ENCODE measurements at regions of chr11 and their contacts with region 1.

Region 1: DNA sequence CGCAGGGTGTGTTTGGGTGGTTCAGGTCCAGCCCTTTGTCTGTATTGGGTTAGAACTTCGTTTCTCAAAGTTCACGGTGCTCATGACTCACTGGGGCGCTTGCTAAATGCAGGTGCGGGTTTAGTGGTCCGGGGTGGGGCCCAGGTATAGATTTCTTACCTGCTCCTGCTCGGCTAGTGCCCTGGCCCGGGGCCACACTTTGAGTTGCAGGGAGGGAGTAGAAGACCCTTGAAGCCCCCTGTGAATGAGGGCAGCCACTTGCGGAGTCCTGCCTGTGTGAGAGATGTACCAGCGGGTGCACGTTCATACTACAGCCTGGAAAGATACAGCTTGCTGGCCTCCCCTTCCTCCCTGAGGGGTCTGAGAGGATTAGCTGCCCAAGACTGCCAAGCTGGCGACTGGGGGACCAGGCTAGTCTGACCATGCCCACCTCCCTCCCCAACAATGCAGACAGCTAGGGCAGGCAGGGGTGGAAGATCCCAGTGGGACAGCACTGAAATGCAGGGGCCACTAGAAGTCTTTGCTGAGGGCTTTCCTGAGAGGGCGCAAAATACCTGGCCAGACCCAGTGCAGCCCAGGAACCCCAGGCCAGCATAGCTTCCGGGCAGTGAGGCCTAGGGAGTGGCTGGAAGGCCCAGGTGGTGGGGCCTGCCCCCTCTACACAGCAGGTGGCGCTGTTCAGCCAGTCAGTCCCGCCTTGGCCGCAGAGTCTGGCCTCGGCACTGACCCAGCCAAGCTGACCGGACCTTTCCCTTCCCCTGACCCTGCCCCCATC is 5.1 kb upstream of the MYRF start:
- DNase-seq: peak; percentile 52
- H3K4me3 ChIP-seq: no peak overlapping the region
- H3K27ac ChIP-seq: no peak overlapping the region
- H3K4me1 ChIP-seq: no peaks in the 10 kb centered on the region
- H3K27me3 ChIP-seq: no peaks in the 10 kb centered on the region
- CTCF ChIP-seq: peak; percentile 93 to 98
- POLR2A ChIP-seq: no peak

Region 2: DNA sequence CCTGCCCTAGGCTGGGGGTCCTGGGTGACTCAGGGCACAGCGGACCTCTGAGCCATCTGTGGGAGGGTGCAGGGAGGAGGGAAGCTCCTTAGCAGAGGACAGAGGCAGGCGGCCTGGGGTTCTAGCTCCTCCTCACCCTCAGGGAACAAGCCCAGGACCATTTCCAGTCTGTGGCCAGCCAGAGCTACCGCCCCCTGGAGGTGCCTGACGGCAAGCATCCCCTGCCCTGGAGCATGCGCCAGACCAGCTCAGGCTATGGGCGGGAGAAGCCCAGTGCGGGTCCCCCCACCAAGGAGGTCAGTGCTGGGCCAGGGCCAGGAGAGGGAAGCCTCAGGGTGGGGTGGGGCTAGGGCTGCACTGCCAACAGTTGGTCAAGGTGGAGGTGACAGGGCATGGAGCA is 264.9 kb before region 1 on chr11:
- CTCF ChIA-PET with region 1: no interaction called
- POLR2A ChIA-PET with region 1: no interaction called
- dilution Hi-C with region 1: no loop called
- intact Hi-C with region 1: no loop called
- DNase-seq: no peak
- H3K4me3 ChIP-seq: no peak overlapping the region
- H3K27ac ChIP-seq: no peak overlapping the region
- H3K4me1 ChIP-seq: no peaks in the 10 kb centered on the region
- H3K27me3 ChIP-seq: no peaks in the 10 kb centered on the region
- CTCF ChIP-seq: peak; percentile 54 to 81
- POLR2A ChIP-seq: no peak

Region 3: GRCh38 chr11:61764606-61765260 is 17.4 kb after region 1 on chr11:
- CTCF ChIA-PET with region 1: interaction called, 29 read pairs
- POLR2A ChIA-PET with region 1: no interaction called
- dilution Hi-C with region 1: no loop called
- intact Hi-C with region 1: no loop called
- DNase-seq: no peak
- H3K4me3 ChIP-seq: no peak overlapping the region
- H3K27ac ChIP-seq: no peak overlapping the region
- H3K4me1 ChIP-seq: no peaks in the 10 kb centered on the region
- H3K27me3 ChIP-seq: peaks cover 0 to 2% of the 10 kb centered on the region in 2 experiments
- CTCF ChIP-seq: no peak
- POLR2A ChIP-seq: no peak

Region 4: DNA sequence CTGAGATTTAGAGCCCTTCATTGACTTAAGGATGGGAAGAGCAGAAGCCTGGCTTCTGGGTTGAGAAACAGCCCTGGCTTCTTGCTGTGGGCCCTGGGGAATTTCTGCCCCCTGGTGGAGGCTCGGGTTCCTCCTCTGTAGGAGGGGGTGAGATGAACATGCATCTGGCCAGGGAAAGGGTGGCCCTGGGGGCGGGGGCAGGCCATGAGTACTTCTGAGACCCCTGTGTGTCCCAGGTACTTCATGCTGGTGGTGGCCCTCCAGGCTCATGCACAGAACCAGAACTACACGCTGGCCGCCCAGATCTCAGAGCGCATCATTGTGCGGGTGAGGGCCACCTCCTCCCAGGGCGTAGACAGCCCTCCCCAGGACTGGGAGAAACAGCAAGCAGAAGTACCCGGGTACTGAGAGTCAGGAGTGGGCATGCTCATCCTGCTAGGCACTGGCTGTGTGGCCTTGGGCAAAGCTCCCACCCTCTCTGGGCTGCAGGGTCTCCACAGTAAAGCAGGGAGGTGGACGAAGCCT is 29.2 kb after region 1 on chr11:
- CTCF ChIA-PET with region 1: interaction called, 91 read pairs
- POLR2A ChIA-PET with region 1: no interaction called
- dilution Hi-C with region 1: no loop called
- intact Hi-C with region 1: loop called (anchors 1 kb)
- DNase-seq: peak; percentile 50
- H3K4me3 ChIP-seq: no peak overlapping the region
- H3K27ac ChIP-seq: no peak overlapping the region
- H3K4me1 ChIP-seq: peaks cover 6% of the 10 kb centered on the region
- H3K27me3 ChIP-seq: no peaks in the 10 kb centered on the region
- CTCF ChIP-seq: peak; percentile 72 to 86
- POLR2A ChIP-seq: no peak

Region 5: DNA sequence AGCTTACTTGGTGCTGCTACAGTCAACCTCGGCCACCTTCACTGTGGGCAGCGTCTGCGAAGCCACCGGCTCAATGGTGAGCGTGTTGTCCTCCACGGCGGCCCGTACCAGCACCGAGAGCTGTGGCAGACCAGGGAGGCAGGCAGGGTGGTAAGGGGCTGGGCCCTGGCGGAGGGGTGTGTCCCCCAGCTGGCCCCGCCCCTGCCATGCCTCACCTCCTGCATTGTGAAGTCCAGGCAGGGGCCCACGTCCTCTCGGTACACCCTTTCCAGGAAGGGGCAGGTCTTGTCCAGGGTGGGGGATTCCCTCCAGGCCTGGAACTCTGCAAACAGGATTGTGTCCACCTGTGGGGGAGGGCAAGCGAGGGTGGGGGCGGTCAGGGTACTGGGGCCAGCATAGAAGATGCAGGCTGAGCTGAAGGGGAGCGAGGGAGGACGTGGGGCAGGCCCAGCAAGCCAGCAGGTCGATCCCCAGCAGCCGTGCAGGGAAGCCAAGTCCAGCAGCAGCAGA is 157.2 kb after region 1 on chr11:
- CTCF ChIA-PET with region 1: no interaction called
- POLR2A ChIA-PET with region 1: no interaction called
- dilution Hi-C with region 1: no loop called
- intact Hi-C with region 1: no loop called
- DNase-seq: peak; percentile 21
- H3K4me3 ChIP-seq: no peak overlapping the region
- H3K27ac ChIP-seq: no peak overlapping the region
- H3K4me1 ChIP-seq: no peaks in the 10 kb centered on the region
- H3K27me3 ChIP-seq: no peaks in the 10 kb centered on the region
- CTCF ChIP-seq: no peak
- POLR2A ChIP-seq: no peak

Measured in endothelial cell of umbilical vein (primary cell).